ENCODE measurements at regions of chr1 and their contacts with region 1.

Region 1: GRCh38 chr1:20521960-20522861 is 14.3 kb upstream of the MUL1 start:
- DNase-seq: peak; percentile 83

Region 2: GRCh38 chr1:20574686-20575540 is 52.7 kb after region 1 on chr1:
- intact Hi-C with region 1: loop called (anchors 2 kb)
- DNase-seq: peak; percentile 94

Region 3: GRCh38 chr1:20633190-20634064 is 111.2 kb after region 1 on chr1 and contains the start of gene PINK1:
- intact Hi-C with region 1: loop called (anchors 2 kb)
- DNase-seq: peak; percentile 94
- total RNA-seq, gene PINK1: 224 TPM

Measured in cardiac septum (tissue), 1 donor.